H1 (cell line): ENCODE measurements at regions of chr9 and their contacts with region 1.

Region 1: DNA sequence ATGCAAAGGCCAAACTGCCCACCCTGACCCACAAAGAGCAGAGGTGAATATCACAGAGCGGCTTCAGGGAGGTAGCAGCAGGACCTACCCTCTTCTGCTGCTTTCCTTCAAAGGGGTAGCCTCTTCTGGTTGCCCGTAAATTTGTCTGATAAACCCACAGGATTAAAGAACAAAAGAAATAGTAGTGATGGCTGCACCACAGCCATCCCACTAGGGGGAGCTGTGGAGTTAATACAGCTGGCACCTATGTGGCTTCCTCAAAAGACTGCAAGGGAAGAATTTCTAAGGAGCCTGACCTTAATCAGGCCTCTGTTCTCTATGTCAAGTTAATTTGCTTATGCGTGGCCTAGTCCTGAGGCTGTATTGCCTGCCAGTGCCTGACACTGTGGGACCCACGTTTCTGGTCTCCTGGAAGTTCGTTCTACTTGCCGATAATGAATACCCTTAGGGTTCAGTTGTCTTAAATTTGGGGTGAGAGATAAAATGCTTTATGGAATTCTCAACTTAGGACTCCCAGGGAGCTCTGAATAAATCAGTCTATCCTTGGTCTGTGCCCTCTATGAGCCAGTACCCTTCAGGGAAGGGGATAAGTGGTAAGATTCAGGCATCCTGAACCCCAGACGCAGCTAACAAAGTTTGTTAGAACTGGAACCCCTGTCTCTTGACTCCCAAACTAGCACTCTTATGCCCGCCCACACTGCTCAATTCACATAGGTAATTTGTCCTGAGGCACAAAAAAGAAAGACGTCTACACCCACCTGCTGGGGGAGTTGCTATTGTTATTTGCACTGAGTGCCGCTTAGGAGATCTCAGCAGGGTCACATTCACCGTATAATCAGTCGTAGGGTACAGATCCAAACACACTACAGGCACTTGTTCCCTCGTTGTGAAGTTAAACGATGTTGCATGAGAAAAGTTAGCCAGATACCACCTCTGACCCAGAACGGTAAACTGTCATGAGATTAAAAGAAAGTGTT is 77.1 kb downstream of the SUSD1 start:
- DNase-seq: peak; percentile 72 to 81
- H3K4me3 ChIP-seq: peak overlapping the region in 1 of 4 experiments; percentile 27; a peak in 2 of 8 replicates
- H3K27ac ChIP-seq: peak overlapping the region; percentile 16; the same call in 1 of the 2 replicates
- H3K4me1 ChIP-seq: peaks cover 3 to 13% (median 5%) of the 10 kb centered on the region in 4 experiments; a peak in 6 of 7 replicates
- H3K27me3 ChIP-seq: no peaks in the 10 kb centered on the region
- CTCF ChIP-seq: peak; percentile 36 to 86 (median 79)
- EP300 ChIP-seq: no peak
- POLR2A ChIP-seq: no peak
- RAD21 ChIP-seq: peak; percentile 75 to 86

Region 2: DNA sequence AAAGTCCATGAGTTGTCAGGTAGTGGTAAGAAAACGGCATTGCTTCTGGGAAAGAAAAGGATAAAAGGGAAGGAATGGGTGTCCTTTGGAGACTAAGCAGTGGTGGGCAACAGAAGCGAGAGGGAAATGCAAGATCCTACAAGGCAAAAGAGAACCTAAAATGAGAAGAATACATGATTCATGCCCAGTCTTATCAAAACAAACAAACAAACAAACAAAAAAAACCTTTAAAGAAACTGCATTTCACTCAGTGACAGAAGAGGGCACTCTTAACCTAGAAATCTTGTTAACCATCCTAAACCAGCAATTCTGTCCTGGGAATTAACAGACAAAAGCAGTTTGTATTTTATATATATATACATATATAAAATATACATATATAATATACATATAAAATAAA is 11.4 kb before region 1 on chr9:
- CTCF ChIA-PET with region 1: interaction called, 20 read pairs
- POLR2A ChIA-PET with region 1: no interaction called
- DNase-seq: no peak
- H3K4me3 ChIP-seq: no peak overlapping the region
- H3K27ac ChIP-seq: no peak overlapping the region
- H3K4me1 ChIP-seq: no peaks in the 10 kb centered on the region; a peak in 1 of 7 replicates
- H3K27me3 ChIP-seq: no peaks in the 10 kb centered on the region
- CTCF ChIP-seq: peak in 2 of 3 experiments; percentile 48 to 56; a peak in 2 of 4 replicates
- EP300 ChIP-seq: no peak
- POLR2A ChIP-seq: no peak
- RAD21 ChIP-seq: peak; percentile 75 to 77

Region 3: DNA sequence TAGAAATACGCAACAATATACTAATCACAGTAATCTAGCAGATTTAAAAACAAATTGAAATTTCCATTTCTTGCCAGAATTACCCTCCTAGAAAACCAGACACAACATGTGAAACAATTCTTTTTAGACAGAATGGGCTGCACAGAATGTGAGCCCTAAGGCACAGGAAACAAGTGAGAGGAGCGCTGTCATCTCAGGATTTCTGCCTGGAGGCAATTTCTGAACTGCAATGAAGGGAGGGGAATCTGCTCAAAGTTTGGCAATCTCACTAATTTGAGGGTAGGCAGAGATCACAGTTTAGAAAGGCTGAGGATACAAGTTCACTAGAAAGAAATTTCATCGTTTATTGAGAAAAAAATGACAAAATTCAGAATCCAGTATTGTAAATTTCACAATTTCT is 549.6 kb after region 1 on chr9:
- CTCF ChIA-PET with region 1: no interaction called
- POLR2A ChIA-PET with region 1: no interaction called
- DNase-seq: no peak
- H3K4me3 ChIP-seq: no peak overlapping the region
- H3K27ac ChIP-seq: no peak overlapping the region
- H3K4me1 ChIP-seq: no peaks in the 10 kb centered on the region
- H3K27me3 ChIP-seq: no peaks in the 10 kb centered on the region
- CTCF ChIP-seq: no peak
- EP300 ChIP-seq: no peak
- POLR2A ChIP-seq: no peak
- RAD21 ChIP-seq: no peak